ENCODE measurements at regions of chr13 and their contacts with region 1.

Region 1: DNA sequence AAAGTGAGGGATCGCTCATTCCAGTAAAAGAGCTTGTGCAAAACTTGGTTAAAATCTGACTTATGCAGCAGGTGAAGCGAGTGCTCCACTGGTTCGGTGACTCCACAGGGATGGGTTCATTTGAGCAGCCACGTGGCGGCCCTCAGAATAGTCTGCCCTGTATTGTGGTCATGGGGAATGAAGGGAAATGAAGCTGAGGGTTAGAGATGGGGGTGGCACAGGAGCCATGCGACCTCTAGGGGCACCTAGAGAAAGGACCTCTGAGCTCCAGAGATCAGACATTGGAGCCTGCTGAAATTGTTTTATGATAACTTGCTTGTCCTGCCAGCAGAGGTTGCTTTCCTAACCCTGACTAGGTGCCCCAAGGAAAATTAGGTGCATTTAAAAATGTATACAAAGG is 26.6 kb downstream of the CBY2 start:
- DNase-seq: peak; percentile 57
- ATAC-seq: peak; percentile 100
- H3K4me3 Mint-ChIP-seq: no peak overlapping the region
- H3K27ac Mint-ChIP-seq: 0 out of 2 replicates have a peak overlapping the region, but pooled peaks have one; percentile 60
- H3K4me1 Mint-ChIP-seq: peaks cover 5% of the 10 kb centered on the region
- H3K27me3 Mint-ChIP-seq: peaks cover 7% of the 10 kb centered on the region
- CTCF ChIP-seq: peak; percentile 59; the same call in 1 of the 2 replicates

Region 2: GRCh38 chr13:45511310-45512097 is 217.3 kb before region 1 on chr13:
- CTCF ChIA-PET with region 1: interaction called, 10 read pairs
- POLR2A ChIA-PET with region 1: no interaction called
- DNase-seq: no peak
- ATAC-seq: peak; percentile 61
- H3K4me3 Mint-ChIP-seq: no peak overlapping the region
- H3K27ac Mint-ChIP-seq: no peak overlapping the region
- H3K4me1 Mint-ChIP-seq: no peaks in the 10 kb centered on the region
- H3K27me3 Mint-ChIP-seq: no peaks in the 10 kb centered on the region
- CTCF ChIP-seq: peak; percentile 84

Measured in WTC11 (cell line).